Spleen (tissue), 13 donors: ENCODE measurements at regions of chr12 and their contacts with region 1.

Region 1: DNA sequence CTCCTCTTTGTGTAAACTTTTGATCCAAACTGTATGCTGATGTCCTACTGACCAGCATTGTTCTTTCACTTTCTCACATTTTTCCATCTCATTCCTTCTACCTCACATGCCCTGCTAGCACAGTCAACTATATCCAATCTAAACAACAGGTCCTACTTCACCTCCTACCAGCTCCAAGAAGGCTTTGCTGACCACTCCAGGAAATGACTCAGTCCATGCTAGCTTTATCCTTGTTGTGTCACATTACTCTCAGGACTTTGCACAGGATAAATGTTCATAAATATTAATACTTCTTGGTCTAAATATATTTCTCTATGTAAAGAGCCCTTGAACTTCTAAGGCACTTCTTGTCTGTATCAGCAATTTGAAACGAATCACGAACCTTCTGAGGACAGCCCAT is 64.9 kb upstream of the PCED1B start:
- DNase-seq: no peak
- H3K4me3 ChIP-seq: no peak overlapping the region
- H3K27ac ChIP-seq: no peak overlapping the region
- H3K4me1 ChIP-seq: no peaks in the 10 kb centered on the region
- H3K27me3 ChIP-seq: no peaks in the 10 kb centered on the region
- CTCF ChIP-seq: no peak
- POLR2A ChIP-seq: no peak

Region 2: DNA sequence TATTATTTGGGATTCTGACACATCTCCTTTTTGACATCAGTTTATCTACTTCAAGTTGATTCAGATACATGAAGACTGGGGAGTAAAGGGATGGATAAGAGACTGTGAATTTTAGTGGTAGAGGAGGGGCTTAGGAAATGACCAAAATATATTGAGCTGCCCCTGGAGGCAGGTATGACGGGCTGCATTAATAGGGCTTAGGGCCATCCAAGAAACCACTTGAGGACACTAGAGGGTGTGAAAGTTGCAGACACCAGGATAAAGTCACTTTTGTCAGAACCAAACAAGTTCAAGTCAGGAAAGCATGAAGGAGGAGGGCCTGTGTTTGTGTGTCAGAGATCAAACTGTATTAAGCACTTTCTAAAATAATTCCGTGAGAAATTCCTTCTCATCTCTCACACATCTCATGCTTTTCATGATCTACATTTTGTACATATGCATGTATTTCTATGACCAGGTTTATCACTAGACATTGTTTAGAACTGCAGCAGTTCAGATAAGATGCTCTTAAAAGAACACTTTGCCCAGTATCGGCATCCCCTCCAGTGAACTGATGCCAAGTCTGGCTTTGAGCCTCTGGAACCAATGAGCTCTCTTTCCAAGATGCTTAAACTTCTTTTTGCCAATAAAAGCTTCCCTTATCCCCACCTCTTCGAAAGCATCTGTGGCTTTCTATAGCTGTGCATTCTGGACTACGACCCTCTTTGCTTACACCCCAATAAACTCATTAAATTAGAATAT is 882.6 kb before region 1 on chr12:
- intact Hi-C with region 1: loop called (anchors 10 kb)
- DNase-seq: no peak
- H3K4me3 ChIP-seq: no peak overlapping the region
- H3K27ac ChIP-seq: no peak overlapping the region
- H3K4me1 ChIP-seq: no peaks in the 10 kb centered on the region
- H3K27me3 ChIP-seq: no peaks in the 10 kb centered on the region
- CTCF ChIP-seq: no peak
- POLR2A ChIP-seq: no peak

Region 3: GRCh38 chr12:47156167-47156736 is 141.8 kb after region 1 on chr12:
- intact Hi-C with region 1: no loop called
- DNase-seq: no peak
- H3K4me3 ChIP-seq: no peak overlapping the region
- H3K27ac ChIP-seq: peak overlapping the region in 7 of 8 donors; percentile 29 to 79 (median 66)
- H3K4me1 ChIP-seq: peaks cover 0 to 21% (median 11%) of the 10 kb centered on the region in 6 donors
- H3K27me3 ChIP-seq: no peaks in the 10 kb centered on the region
- CTCF ChIP-seq: no peak
- POLR2A ChIP-seq: no peak